ENCODE measurements at regions of chr5 and their contacts with region 1.

Region 1: DNA sequence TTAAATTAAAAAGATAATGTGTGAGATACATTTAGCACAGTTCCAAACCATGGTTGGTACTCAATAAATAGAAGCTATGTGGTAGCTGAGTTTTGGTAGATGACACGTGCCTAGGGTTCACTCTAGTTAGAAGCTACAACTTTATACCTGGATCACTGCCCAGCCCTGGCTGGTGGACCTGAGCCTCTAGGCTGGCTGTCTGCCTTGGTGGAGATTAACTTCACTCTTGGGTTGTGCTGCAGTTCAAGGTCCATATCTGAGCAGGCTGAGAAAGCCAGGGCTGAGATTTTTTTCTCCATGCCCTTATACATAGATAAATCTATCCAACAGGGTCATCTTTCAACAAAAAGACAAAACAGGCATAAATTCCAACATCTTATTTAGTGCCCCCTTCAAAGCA is 44.6 kb upstream of the SPDL1 start:
- DNase-seq: no peak
- H3K4me3 Mint-ChIP-seq: no peak overlapping the region
- H3K27ac Mint-ChIP-seq: no peak overlapping the region
- H3K4me1 Mint-ChIP-seq: no peaks in the 10 kb centered on the region
- H3K27me3 Mint-ChIP-seq: peaks cover 29% of the 10 kb centered on the region

Region 2: GRCh38 chr5:169325273-169325672 is 213.7 kb before region 1 on chr5:
- CTCF ChIA-PET with region 1: no interaction called
- intact Hi-C with region 1: loop called (anchors 5 kb)
- DNase-seq: no peak
- H3K4me3 Mint-ChIP-seq: no peak overlapping the region
- H3K27ac Mint-ChIP-seq: no peak overlapping the region
- H3K4me1 Mint-ChIP-seq: peaks cover 2% of the 10 kb centered on the region
- H3K27me3 Mint-ChIP-seq: peaks cover 2% of the 10 kb centered on the region

Region 3: DNA sequence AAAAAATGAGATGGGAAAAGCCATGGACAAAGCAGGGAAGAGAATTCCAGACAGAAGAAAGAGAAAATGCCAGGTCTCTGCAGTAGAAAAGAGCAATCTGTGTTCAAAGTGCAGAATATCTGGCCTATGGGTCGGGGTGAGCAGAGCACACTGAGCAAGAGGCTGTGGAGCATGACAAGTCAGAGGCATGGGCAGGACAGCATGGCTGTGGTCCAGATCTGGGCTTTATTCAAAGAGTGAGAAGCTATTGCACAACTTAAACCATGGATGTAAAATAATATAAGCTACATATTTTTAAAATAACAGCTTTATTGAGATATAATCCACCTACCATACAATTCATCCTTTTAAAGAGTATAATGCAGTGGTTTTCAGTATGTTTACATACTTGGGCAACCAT is 88.5 kb before region 1 on chr5:
- CTCF ChIA-PET with region 1: no interaction called
- intact Hi-C with region 1: no loop called
- DNase-seq: no peak
- H3K4me3 Mint-ChIP-seq: no peak overlapping the region
- H3K27ac Mint-ChIP-seq: no peak overlapping the region
- H3K4me1 Mint-ChIP-seq: no peaks in the 10 kb centered on the region
- H3K27me3 Mint-ChIP-seq: peaks cover 5% of the 10 kb centered on the region

Measured in activated naive CD4-positive, alpha-beta T cell treated with anti-CD3 and anti-CD28 coated beads for 36 hours (primary cell).